ENCODE measurements at regions of chrX and their contacts with region 1.

Region 1: GRCh38 chrX:71365876-71366673 is at the start of gene TAF1:
- DNase-seq: peak; percentile 93 to 96
- ATAC-seq: peak; percentile 94 to 98
- H3K4me3 ChIP-seq: peak within 1 kb of the TSS; percentile 67 to 85 (median 82)
- H3K27ac ChIP-seq: peak within 1 kb of the TSS; percentile 81 to 96 (median 88)
- H3K4me1 ChIP-seq: peaks cover 8 to 10% of the 10 kb centered on the region in 2 donors
- H3K27me3 ChIP-seq: no peaks in the 10 kb centered on the region
- CTCF ChIP-seq: no peak
- POLR2A ChIP-seq: peak; percentile 71 to 83
- total RNA-seq, gene TAF1: 13.2 to 21.7 (median 19.1) TPM

Region 2: DNA sequence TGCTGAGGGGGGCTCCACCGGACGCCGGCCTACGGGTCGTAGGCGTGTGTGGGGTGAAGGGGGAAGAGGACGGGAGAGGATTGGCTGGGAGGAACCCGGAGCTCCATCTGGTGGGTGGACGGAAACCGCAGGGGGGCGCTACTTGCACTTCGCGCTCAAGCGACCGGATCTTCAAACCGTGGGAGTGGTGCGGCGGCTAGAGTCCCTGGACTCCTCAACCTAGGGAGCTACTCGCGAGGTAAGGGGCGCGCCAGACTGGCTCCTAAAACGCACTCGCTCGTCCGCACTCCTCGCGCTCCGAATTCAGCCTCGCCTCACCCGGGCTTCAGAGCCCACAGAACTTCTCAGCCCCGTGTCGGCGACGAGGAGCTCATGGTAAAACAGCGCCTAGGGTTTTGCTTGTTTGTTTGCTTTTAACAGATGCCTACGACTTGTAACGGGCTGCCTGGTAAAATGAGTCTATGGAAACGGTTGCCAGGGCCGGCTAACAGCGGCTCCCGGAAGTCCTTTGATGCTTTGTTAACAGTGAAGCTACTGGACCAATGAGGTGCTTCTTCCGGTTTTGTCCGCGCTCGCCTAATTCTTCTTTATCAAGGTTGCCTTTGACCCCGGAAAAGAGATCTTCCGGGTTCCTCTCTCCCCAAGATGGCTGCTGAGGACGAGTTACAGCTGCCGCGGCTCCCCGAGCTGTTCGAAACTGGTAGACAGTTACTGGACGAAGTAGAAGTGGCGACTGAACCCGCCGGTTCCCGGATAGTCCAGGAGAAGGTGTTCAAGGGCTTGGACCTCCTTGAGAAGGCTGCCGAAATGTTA is 1232.6 kb before region 1 on chrX and contains the start of gene IGBP1:
- in situ Hi-C with region 1: no loop called
- intact Hi-C with region 1: loop called (anchors 5 kb)
- DNase-seq: peak; percentile 72 to 81
- ATAC-seq: peak; percentile 99
- H3K4me3 ChIP-seq: peak within 1 kb of the TSS; percentile 60 to 96 (median 86)
- H3K27ac ChIP-seq: peak within 1 kb of the TSS; percentile 71 to 90 (median 81)
- H3K4me1 ChIP-seq: peaks cover 5 to 7% of the 10 kb centered on the region in 2 donors
- H3K27me3 ChIP-seq: no peaks in the 10 kb centered on the region
- CTCF ChIP-seq: peak; percentile 34 to 68 (median 56)
- POLR2A ChIP-seq: peak; percentile 11 to 35
- total RNA-seq, gene IGBP1: 68.7 to 109 (median 75.1) TPM

Region 3: GRCh38 chrX:71254092-71254941 is 111.8 kb before region 1 on chrX and contains the start of gene ZMYM3:
- in situ Hi-C with region 1: loop called in 2 of 4 experiments (anchors 25 kb)
- intact Hi-C with region 1: loop called (anchors 1 kb)
- DNase-seq: peak; percentile 73 to 85
- ATAC-seq: peak; percentile 83 to 90
- H3K4me3 ChIP-seq: peak within 1 kb of the TSS; percentile 69 to 85 (median 82)
- H3K27ac ChIP-seq: peak within 1 kb of the TSS; percentile 88 to 94 (median 94)
- H3K4me1 ChIP-seq: peaks cover 0 to 8% of the 10 kb centered on the region in 2 donors
- H3K27me3 ChIP-seq: no peaks in the 10 kb centered on the region
- CTCF ChIP-seq: peak in 1 of 5 experiments; percentile 22
- POLR2A ChIP-seq: peak; percentile 48 to 53
- total RNA-seq, gene ZMYM3: 7.1 to 10.2 (median 8.9) TPM

Region 4: GRCh38 chrX:71283403-71284143 is 82.5 kb before region 1 on chrX and contains the start of gene NONO:
- in situ Hi-C with region 1: no loop called
- intact Hi-C with region 1: loop called (anchors 10 kb)
- DNase-seq: peak; percentile 87 to 88
- ATAC-seq: peak; percentile 99 to 100
- H3K4me3 ChIP-seq: peak within 1 kb of the TSS; percentile 67 to 87 (median 71)
- H3K27ac ChIP-seq: peak within 1 kb of the TSS; percentile 82 to 95 (median 90)
- H3K4me1 ChIP-seq: peaks cover 21 to 23% of the 10 kb centered on the region in 2 donors
- H3K27me3 ChIP-seq: no peaks in the 10 kb centered on the region
- CTCF ChIP-seq: no peak
- POLR2A ChIP-seq: peak; percentile 70 to 74
- total RNA-seq, gene NONO: 90.5 to 101 (median 92.9) TPM

Region 5: DNA sequence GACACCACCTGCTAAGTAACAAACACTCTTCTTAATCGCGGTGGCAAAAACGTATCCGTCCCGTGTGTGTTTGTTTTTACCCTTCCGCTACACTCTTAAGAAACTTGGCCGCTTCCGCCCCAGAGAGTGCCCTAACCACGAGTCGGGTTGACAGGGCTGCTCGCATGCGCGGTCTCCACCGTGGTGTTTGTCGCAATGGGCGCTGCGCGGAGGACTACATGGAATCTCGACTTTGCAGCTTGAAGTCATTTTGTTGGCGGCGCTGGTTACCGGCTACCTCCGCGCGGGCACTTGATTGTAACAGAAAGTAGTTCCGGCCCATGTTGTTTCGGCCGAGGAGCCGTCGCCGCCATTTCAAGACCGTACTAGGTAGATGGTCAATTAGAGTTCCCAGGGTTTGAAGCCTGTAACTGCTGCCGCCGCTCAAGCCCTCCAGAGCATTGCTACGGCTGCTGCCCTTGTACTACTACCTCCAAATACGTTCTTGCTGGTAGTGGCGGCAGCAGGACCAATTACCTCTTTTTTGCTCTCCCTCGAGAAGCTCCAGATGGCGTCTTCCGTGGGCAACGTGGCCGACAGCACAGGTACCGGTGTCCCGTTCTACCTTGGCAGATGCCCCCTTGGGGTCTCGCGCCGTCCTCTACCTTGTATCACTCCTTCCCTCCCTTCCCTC is 166.8 kb after region 1 on chrX and contains the start of gene OGT:
- in situ Hi-C with region 1: no loop called
- intact Hi-C with region 1: loop called (anchors 1 kb)
- DNase-seq: peak; percentile 94 to 96
- ATAC-seq: peak; percentile 83 to 88
- H3K4me3 ChIP-seq: peak within 1 kb of the TSS; percentile 69 to 87 (median 78)
- H3K27ac ChIP-seq: peak within 1 kb of the TSS; percentile 78 to 95 (median 90)
- H3K4me1 ChIP-seq: peaks cover 1 to 4% of the 10 kb centered on the region in 2 donors
- H3K27me3 ChIP-seq: no peaks in the 10 kb centered on the region
- CTCF ChIP-seq: peak in 1 of 5 experiments; percentile 7
- POLR2A ChIP-seq: peak; percentile 73 to 81
- total RNA-seq, gene OGT: 34.5 to 146 (median 62.1) TPM

Region 6: DNA sequence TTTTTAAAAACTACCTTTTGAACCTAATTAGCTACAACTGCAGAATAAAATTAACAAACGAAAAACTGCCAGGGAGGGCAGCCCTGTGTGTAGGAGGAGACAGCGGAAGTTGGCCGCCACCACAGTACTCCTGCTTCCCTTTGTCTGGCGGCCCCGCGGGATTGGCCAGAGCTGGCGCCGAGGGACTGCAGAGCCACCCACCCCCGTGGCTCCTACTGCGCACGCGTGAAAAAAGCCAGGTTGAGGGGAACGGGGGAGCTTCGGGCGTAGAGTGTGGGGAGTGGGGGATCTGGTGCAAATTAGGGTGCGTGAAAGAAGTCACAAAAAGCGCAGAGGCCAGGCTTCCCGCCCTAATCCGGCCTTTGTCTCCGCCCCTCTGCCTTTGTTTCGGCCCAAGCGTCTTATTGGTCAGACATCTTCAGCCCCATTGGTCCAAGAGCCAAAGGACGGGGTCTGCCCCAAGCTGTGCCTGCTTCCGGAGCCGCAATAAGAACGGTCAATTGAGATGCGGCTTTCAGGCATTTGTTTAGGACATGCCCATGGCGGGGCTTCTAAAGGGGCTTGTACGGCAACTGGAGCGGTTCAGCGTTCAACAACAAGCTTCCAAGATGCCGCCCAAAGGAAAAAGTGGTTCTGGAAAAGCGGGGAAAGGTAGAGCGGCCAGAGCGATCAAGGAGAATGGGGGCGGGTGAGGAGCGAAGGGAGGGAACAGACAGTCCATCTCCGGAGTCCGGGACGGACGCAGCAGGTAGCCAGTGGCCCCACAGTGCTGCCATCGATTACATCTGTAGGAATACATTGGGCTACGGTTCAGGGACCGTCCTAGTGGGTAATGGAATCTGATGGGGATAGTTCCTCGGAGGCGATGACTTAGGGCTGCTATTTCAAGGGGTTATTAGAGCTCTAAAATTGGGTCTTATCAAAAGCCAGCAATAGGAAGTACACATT is 815.4 kb after region 1 on chrX and contains the start of gene PIN4:
- in situ Hi-C with region 1: no loop called
- intact Hi-C with region 1: loop called (anchors 5 kb)
- DNase-seq: peak; percentile 83 to 93
- ATAC-seq: peak; percentile 99 to 100
- H3K4me3 ChIP-seq: peak within 1 kb of the TSS; percentile 74 to 85 (median 79)
- H3K27ac ChIP-seq: peak within 1 kb of the TSS; percentile 65 to 92 (median 82)
- H3K4me1 ChIP-seq: peaks cover 12 to 16% of the 10 kb centered on the region in 2 donors
- H3K27me3 ChIP-seq: no peaks in the 10 kb centered on the region
- CTCF ChIP-seq: no peak
- POLR2A ChIP-seq: peak; percentile 33 to 58
- total RNA-seq, gene PIN4: 4.7 to 11.2 (median 8.5) TPM

Measured in gastrocnemius medialis (tissue), 4 donors.